Adrenal gland (tissue), 19 donors: ENCODE measurements at regions of chr1 and their contacts with region 1.

Region 1: GRCh38 chr1:21659099-21659923 is 9.8 kb downstream of the RAP1GAP start:
- DNase-seq: peak; percentile 81 to 94 (median 89)
- H3K4me3 ChIP-seq: no peak overlapping the region
- H3K27ac ChIP-seq: peak overlapping the region in 2 of 5 donors; percentile 63 to 67
- H3K4me1 ChIP-seq: peaks cover 15 to 34% of the 10 kb centered on the region in 2 donors
- H3K27me3 ChIP-seq: no peaks in the 10 kb centered on the region
- CTCF ChIP-seq: peak; percentile 94 to 97 (median 96)
- POLR2A ChIP-seq: no peak

Region 2: GRCh38 chr1:21220815-21221214 is 438.5 kb before region 1 on chr1:
- intact Hi-C with region 1: loop called in 1 of 2 experiments (anchors 10 kb)
- DNase-seq: peak in 1 of 7 donors; percentile 65
- H3K4me3 ChIP-seq: no peak overlapping the region
- H3K27ac ChIP-seq: no peak overlapping the region
- H3K4me1 ChIP-seq: no peaks in the 10 kb centered on the region
- H3K27me3 ChIP-seq: no peaks in the 10 kb centered on the region
- CTCF ChIP-seq: no peak
- POLR2A ChIP-seq: no peak

Region 3: GRCh38 chr1:21368515-21369289 is 290.6 kb before region 1 on chr1:
- intact Hi-C with region 1: loop called in 1 of 2 experiments (anchors 5 kb)
- DNase-seq: peak; percentile 81 to 91 (median 85)
- H3K4me3 ChIP-seq: no peak overlapping the region
- H3K27ac ChIP-seq: no peak overlapping the region
- H3K4me1 ChIP-seq: peaks cover 0 to 6% of the 10 kb centered on the region in 2 donors
- H3K27me3 ChIP-seq: no peaks in the 10 kb centered on the region
- CTCF ChIP-seq: peak; percentile 98 to 100 (median 100)
- POLR2A ChIP-seq: peak in 1 of 2 donors; percentile 31

Region 4: DNA sequence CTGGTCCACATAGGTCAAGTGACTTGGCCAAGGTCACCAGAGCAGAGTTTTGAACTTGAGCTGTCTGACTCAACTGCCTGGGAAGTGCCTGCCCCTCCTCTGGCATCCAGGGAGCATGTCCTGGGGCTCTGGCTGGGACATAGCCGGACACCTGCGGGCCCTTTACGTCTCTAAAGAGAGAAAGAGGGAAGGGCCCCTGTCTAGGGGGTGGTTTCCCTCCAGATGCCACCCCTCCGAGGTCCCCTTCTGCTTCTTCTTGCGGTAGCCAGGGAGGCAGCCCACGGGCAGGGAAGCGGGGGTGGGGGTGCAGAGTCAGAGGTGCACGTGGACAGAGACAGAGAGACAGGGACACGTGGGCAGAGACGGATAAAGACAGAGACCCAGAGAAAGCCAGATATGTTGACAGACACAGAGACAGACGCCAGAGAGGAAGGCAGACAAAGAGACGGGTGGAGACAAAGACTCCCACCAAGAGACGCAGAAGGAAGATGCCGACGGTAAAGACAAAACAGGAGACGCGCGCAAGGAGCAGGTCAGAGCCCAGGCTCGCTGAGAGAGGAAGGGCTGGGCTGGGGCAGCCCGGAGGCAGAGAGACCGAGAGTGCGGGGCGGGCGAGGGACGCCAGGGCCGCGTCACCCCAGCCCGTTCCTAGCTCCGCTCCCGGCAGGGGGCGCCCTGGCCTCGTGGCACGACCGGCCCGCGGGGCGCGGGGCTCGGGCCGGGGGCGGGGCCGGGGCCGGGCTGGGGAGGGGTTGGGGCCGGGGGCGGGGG is 150.5 kb before region 1 on chr1:
- intact Hi-C with region 1: loop called in 1 of 2 experiments (anchors 10 kb)
- DNase-seq: peak; percentile 64 to 87 (median 84)
- H3K4me3 ChIP-seq: peak overlapping the region in 2 of 4 donors; percentile 16 to 51
- H3K27ac ChIP-seq: peak overlapping the region in 3 of 5 donors; percentile 57 to 65 (median 62)
- H3K4me1 ChIP-seq: peaks cover 8 to 31% of the 10 kb centered on the region in 2 donors
- H3K27me3 ChIP-seq: no peaks in the 10 kb centered on the region
- CTCF ChIP-seq: peak; percentile 18 to 74 (median 56)
- POLR2A ChIP-seq: no peak